Aorta (tissue), 5 donors: ENCODE measurements at regions of chr2 and their contacts with region 1.

Region 1: DNA sequence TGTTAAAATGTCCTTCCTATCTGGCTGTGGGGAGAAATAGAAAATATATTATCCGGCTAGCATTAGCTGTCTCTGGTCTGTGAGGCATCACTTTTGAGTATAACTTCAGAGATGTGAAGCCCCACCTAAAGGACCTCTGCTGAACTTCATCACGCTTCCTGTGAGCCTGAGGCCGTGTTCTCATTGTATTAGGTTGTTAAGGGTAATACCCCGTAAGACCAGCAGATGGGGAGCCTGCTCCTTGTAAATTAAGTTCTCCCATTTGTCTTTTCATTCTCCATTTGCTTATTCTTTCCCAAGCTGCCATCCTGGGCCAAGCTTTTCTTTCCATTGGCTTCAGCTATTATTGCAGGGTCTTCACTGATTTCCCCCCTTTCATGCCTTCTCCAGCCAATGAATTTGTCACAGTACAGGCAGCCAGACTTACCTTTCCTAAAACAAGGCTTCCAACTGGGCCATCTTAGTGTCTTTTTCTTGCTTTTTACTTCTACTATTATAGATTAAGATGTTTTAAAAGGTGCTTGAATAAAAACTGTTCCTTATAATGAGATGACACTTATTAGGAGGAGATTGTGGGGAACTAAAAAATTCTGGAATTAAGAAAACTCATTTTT is 12.4 kb downstream of the NIF3L1 start:
- DNase-seq: peak in 1 of 2 donors; percentile 67
- ATAC-seq: peak; percentile 80
- H3K4me3 ChIP-seq: no peak overlapping the region
- H3K27ac ChIP-seq: no peak overlapping the region
- H3K4me1 ChIP-seq: no peaks in the 10 kb centered on the region
- H3K27me3 ChIP-seq: no peaks in the 10 kb centered on the region

Region 2: GRCh38 chr2:201006704-201007103 is 105.1 kb after region 1 on chr2:
- intact Hi-C with region 1: no loop called
- DNase-seq: no peak
- ATAC-seq: no peak
- H3K4me3 ChIP-seq: no peak overlapping the region
- H3K27ac ChIP-seq: no peak overlapping the region
- H3K4me1 ChIP-seq: no peaks in the 10 kb centered on the region
- H3K27me3 ChIP-seq: no peaks in the 10 kb centered on the region

Region 3: DNA sequence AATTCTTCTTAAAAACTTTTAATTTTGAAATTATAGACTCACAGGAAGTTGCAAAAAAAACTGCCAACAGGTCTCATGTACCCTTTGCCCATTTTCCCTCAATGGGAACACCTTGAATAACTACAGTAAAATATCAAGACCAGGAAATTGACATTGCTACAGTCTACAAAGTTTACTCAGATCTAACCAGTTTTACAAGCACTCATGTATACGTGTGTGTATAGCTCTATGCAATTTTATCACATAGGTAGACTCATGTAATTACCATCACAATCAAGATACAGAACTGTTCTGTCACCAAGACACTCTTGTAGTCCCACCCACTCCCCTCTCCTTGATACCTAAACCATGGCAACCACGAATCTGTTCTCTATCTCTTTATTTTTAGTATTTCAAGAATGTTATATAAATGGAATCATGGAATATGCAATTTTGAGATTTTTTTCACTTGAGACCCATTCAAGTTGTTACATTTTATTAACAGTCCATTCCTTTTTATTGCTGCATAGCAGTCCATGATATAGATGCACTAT is 163.3 kb after region 1 on chr2:
- intact Hi-C with region 1: loop called (anchors 5 kb)
- DNase-seq: no peak
- ATAC-seq: no peak
- H3K4me3 ChIP-seq: no peak overlapping the region
- H3K27ac ChIP-seq: no peak overlapping the region
- H3K4me1 ChIP-seq: peaks cover 0 to 2% of the 10 kb centered on the region in 2 donors
- H3K27me3 ChIP-seq: no peaks in the 10 kb centered on the region

Region 4: DNA sequence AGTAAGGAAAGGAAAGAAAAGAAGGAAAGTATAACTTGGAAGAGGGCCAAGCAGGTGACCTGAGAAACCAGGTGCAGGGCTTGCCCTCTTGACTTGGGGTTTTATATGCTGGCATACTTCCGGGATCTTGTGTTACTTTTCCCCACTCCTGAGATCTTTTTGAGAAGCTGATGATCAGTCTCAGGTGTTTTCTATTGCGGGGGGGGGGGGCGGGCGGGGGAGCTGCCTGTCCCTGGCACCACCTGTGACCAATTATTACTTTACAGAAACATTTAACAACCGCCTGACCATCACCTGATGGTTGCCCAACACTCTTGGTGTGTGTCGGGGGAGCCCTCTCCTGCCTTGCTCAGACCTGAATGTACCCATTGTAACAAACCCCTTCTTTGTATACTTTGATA is 274.5 kb after region 1 on chr2:
- intact Hi-C with region 1: loop called (anchors 5 kb)
- DNase-seq: no peak
- ATAC-seq: no peak
- H3K4me3 ChIP-seq: no peak overlapping the region
- H3K27ac ChIP-seq: no peak overlapping the region
- H3K4me1 ChIP-seq: no peaks in the 10 kb centered on the region
- H3K27me3 ChIP-seq: no peaks in the 10 kb centered on the region